ENCODE measurements at regions of chr3 and their contacts with region 1.

Region 1: GRCh38 chr3:131714585-131715220 is 211.9 kb upstream of the MRPL3 start:
- DNase-seq: peak; percentile 71
- ATAC-seq: peak; percentile 73
- H3K4me3 ChIP-seq: no peak overlapping the region
- H3K27ac ChIP-seq: peak overlapping the region; percentile 23; the same call in 1 of the 2 replicates
- H3K4me1 ChIP-seq: peaks cover 47% of the 10 kb centered on the region
- H3K27me3 ChIP-seq: no peaks in the 10 kb centered on the region
- CTCF ChIP-seq: no peak
- EP300 ChIP-seq: peak in 1 of 2 experiments; percentile 76; a peak in 2 of 4 replicates
- POLR2A ChIP-seq: no peak
- RAD21 ChIP-seq: peak; percentile 20; the same call in 1 of the 2 replicates

Region 2: DNA sequence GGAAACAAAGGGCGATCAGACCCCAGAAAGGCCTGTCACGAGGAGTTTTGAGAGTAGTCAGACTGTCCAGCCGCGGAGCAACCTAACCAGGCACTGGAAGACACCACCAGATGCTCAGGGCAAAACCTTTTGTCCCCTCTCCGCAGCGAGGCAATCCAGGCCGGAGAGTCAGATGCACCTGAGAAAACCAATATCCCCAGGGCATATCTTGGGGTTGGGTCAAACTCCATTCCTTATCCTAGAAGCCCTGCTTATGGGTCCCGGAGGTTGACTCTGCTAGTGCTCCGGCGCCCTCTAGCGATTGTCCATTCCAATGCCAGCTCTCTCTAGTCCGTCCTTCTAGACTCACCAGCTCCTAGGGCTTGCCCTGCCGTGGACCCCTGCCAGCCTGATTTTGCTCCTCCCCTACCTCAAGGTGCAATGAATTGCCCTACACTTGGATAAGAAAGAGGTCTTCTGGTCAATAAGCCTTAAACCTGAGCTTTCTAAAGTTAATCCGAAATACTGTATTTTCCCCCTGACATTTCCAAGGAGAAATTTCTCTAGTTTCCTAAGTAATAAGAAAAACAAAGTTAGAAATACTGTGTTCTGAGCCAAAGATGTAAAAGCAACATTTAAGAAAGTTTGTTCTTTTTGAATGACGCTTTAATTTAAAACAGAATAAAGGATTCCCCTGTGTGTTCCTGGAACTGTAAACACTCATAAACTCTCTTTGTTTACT is 314.6 kb after region 1 on chr3:
- CTCF ChIA-PET with region 1: interaction called, 4 read pairs
- POLR2A ChIA-PET with region 1: no interaction called
- RAD21 ChIA-PET with region 1: no interaction called
- SMC1A ChIA-PET with region 1: interaction called, 4 read pairs
- in situ Hi-C with region 1: no loop called
- intact Hi-C with region 1: loop called (anchors 5 kb)
- DNase-seq: no peak
- ATAC-seq: peak; percentile 99
- H3K4me3 ChIP-seq: no peak overlapping the region
- H3K27ac ChIP-seq: no peak overlapping the region
- H3K4me1 ChIP-seq: no peaks in the 10 kb centered on the region
- H3K27me3 ChIP-seq: peaks cover 0 to 1% of the 10 kb centered on the region in 2 experiments; a peak in 1 of 4 replicates
- CTCF ChIP-seq: peak; percentile 89 to 92 (median 92); a peak in 5 of 6 replicates
- EP300 ChIP-seq: no peak
- POLR2A ChIP-seq: no peak
- RAD21 ChIP-seq: peak; percentile 94

Measured in GM12878 (cell line).